IMR-90 (cell line): ENCODE measurements at regions of chr11 and their contacts with region 1.

Region 1: DNA sequence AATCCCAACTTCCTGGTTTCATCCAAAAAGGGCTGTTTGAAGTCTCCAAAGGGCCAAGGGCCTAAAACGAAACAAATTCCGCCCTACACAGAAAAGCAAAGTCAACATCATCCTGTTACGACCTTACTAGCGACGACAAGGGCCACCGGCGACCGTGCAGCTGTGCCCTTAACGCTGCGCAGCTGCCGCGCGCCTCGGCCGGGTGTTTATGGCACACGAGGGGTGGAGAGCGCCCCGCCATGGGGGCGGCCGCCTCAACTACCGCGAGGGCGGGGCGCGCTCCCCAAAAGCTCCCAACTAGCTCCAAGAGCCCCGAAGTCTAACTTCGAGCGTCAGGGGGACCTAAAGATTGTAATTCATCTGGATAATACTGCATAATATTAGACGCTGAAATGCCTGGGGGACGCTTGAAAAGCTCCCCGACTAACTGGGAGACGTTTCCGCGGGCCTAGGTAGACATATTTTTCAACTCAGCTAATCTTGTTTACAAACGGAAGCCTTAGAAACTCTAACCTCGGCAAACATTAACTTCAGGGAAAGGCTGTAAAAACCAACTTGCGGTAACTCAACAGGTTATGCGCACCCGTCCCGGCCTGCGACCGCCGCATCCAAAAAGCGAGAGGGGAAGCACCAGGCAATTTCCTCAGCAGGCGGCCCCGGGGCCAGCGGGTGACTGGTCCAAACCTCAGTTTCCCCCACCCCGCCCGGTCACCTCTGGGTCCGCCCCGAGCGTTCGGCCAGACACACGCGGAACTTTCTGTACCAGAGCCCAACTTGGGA is 694 bp downstream of the TMEM123 start:
- DNase-seq: peak; percentile 28
- ATAC-seq: peak; percentile 51
- H3K4me3 ChIP-seq: peak overlapping the region; percentile 94
- H3K27ac ChIP-seq: peak overlapping the region; percentile 84
- H3K4me1 ChIP-seq: peaks cover 17% of the 10 kb centered on the region
- H3K27me3 ChIP-seq: no peaks in the 10 kb centered on the region
- CTCF ChIP-seq: 0 out of 2 replicates have a peak, but pooled peaks have one; percentile 17
- POLR2A ChIP-seq: no peak
- RAD21 ChIP-seq: no peak

Region 2: DNA sequence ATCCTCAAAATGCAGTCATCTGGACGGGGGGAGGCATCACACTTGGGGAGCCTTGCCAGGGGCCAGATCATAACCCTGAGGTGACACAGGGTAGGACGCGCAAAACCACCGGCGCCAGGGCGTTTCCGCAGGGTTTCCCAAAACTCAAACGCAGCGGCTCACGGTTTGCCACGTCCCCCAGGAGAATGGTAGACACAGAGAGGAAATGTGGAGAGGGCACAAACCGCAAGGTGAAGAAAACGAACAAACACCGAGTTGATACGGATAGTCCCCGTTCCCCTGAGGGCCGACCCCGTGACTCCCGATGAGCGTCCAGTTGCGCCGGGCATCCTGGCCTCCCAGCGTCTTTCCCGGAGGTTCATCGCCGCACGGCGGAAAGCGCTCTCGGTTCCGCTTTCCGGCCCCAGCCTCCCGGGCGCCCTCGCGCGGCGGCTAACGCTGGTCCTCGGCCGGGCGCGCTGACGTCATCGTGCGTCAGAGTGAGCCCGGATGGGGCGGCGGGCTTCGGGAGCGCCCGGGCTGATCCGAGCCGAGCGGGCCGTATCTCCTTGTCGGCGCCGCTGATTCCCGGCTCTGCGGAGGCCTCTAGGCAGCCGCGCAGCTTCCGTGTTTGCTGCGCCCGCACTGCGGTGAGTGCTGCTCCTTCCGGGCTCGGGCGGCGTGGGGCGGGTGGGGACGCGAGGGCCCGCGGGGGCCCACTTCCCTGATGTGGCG is 105.0 kb before region 1 on chr11 and contains the start of gene BIRC2:
- CTCF ChIA-PET with region 1: interaction called, 3 read pairs
- POLR2A ChIA-PET with region 1: no interaction called
- dilution Hi-C with region 1: no loop called
- in situ Hi-C with region 1: no loop called
- intact Hi-C with region 1: loop called (anchors 5 kb)
- DNase-seq: peak; percentile 89
- ATAC-seq: peak; percentile 91
- H3K4me3 ChIP-seq: peak within 1 kb of the TSS; percentile 81
- H3K27ac ChIP-seq: peak within 1 kb of the TSS; percentile 95
- H3K4me1 ChIP-seq: no peaks in the 10 kb centered on the region; the same call in 1 of the 2 replicates
- H3K27me3 ChIP-seq: no peaks in the 10 kb centered on the region
- CTCF ChIP-seq: peak; percentile 94
- POLR2A ChIP-seq: peak; percentile 84
- RAD21 ChIP-seq: peak; percentile 36
- total RNA-seq, gene BIRC2: 112 and 204 TPM in 2 replicates

Region 3: GRCh38 chr11:102390667-102391465 is 61.0 kb before region 1 on chr11:
- CTCF ChIA-PET with region 1: no interaction called
- POLR2A ChIA-PET with region 1: no interaction called
- dilution Hi-C with region 1: no loop called
- in situ Hi-C with region 1: no loop called
- intact Hi-C with region 1: loop called (anchors 5 kb)
- DNase-seq: peak; percentile 63
- ATAC-seq: peak; percentile 97
- H3K4me3 ChIP-seq: no peak overlapping the region
- H3K27ac ChIP-seq: no peak overlapping the region
- H3K4me1 ChIP-seq: peaks cover under 1% of the 10 kb centered on the region; the same call in 1 of the 2 replicates
- H3K27me3 ChIP-seq: no peaks in the 10 kb centered on the region
- CTCF ChIP-seq: peak; percentile 77
- POLR2A ChIP-seq: no peak
- RAD21 ChIP-seq: peak; percentile 70